Left ventricle myocardium inferior (tissue), 1 donor: ENCODE measurements at regions of chr1 and their contacts with region 1.

Region 1: DNA sequence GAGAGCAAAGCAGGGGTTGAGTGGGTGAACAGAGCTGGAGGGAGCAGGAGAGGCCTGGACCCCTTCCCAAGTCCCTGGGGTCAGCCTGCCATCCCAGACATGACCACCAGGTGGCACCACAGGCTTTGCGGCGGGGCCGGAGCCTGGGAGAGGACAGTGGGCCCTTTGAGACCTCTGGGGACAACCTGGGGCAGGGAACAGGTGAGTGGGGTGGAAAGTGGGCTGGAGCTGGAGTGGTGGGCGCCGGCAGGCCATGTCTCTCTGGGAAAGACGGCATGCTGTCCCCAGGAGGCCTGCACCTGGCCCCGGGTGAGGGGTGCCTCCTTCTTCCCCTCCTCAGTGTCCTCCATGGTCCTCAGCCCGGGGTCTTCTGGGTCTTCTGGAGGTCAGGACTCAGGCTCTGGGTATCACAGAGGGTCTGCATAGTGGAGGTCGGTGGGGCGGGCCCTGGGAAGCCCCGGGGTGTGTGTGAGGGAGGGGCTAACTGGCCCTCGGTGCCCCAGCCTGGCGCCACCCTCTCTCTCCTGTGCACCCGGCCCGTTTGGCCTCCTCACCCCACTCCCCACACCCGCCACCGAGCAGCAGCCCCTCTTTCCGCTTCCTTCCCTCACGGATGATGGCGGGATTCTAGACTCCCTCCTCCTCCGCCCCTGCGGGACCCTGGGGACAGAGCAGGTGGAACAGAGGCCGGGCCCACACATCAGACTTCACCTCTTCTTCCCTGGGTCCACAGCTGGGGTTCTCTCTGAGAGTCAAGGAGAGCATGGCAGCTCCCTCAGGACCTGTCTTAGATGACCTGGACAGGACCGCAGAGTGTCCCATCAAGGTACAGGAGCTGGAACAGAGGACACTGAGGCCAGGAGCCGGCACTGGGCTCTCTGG is 28.4 kb upstream of the PKP1 start:
- DNase-seq: peak; percentile 56
- H3K4me3 ChIP-seq: no peak overlapping the region
- H3K27ac ChIP-seq: no peak overlapping the region
- H3K4me1 ChIP-seq: peaks cover 7% of the 10 kb centered on the region
- H3K27me3 ChIP-seq: peaks cover 23% of the 10 kb centered on the region
- CTCF ChIP-seq: peak; percentile 97

Region 2: GRCh38 chr1:201198598-201198997 is 56.3 kb before region 1 on chr1:
- intact Hi-C with region 1: no loop called
- DNase-seq: no peak
- H3K4me3 ChIP-seq: no peak overlapping the region
- H3K27ac ChIP-seq: no peak overlapping the region
- H3K4me1 ChIP-seq: no peaks in the 10 kb centered on the region
- H3K27me3 ChIP-seq: no peaks in the 10 kb centered on the region
- CTCF ChIP-seq: no peak

Region 3: GRCh38 chr1:201348211-201348566 is 93.3 kb after region 1 on chr1:
- intact Hi-C with region 1: loop called (anchors 10 kb)
- DNase-seq: no peak
- H3K4me3 ChIP-seq: no peak overlapping the region
- H3K27ac ChIP-seq: no peak overlapping the region
- H3K4me1 ChIP-seq: peaks cover 13% of the 10 kb centered on the region
- H3K27me3 ChIP-seq: peaks cover 7% of the 10 kb centered on the region
- CTCF ChIP-seq: peak; percentile 62

Region 4: GRCh38 chr1:201361652-201362504 is 107.0 kb after region 1 on chr1:
- intact Hi-C with region 1: loop called (anchors 5 kb)
- DNase-seq: peak; percentile 19
- H3K4me3 ChIP-seq: no peak overlapping the region
- H3K27ac ChIP-seq: peak overlapping the region; percentile 60
- H3K4me1 ChIP-seq: peaks cover 30% of the 10 kb centered on the region
- H3K27me3 ChIP-seq: no peaks in the 10 kb centered on the region
- CTCF ChIP-seq: peak; percentile 78

Region 5: GRCh38 chr1:201559679-201560162 is 304.9 kb after region 1 on chr1:
- intact Hi-C with region 1: no loop called
- DNase-seq: peak; percentile 83
- H3K4me3 ChIP-seq: no peak overlapping the region
- H3K27ac ChIP-seq: peak overlapping the region; percentile 42
- H3K4me1 ChIP-seq: peaks cover 94% of the 10 kb centered on the region
- H3K27me3 ChIP-seq: no peaks in the 10 kb centered on the region
- CTCF ChIP-seq: peak; percentile 96

Region 6: DNA sequence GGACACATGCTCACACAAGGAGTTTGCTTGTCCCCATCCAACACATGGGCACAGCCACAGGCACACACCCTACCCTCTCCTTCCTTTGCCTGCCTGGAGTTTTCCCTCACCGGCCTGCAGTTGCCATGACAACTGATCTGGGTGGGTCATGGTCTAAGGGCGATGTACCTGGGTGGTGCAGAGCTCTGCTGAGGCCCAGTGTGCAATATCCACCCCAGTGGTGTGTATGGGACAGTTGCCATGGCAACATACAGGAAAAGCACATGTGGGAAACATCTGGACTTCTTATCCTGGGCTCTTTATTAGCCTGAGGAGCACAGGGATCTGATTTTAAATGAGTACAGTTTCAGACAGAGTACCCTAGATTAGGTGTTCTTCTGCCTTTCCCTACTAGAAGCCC is 382.8 kb after region 1 on chr1:
- intact Hi-C with region 1: no loop called
- DNase-seq: peak; percentile 24
- H3K4me3 ChIP-seq: no peak overlapping the region
- H3K27ac ChIP-seq: peak overlapping the region; percentile 77
- H3K4me1 ChIP-seq: peaks cover 85% of the 10 kb centered on the region
- H3K27me3 ChIP-seq: no peaks in the 10 kb centered on the region
- CTCF ChIP-seq: no peak